GM12878 (cell line): ENCODE measurements at regions of chr2 and their contacts with region 1.

Region 1: DNA sequence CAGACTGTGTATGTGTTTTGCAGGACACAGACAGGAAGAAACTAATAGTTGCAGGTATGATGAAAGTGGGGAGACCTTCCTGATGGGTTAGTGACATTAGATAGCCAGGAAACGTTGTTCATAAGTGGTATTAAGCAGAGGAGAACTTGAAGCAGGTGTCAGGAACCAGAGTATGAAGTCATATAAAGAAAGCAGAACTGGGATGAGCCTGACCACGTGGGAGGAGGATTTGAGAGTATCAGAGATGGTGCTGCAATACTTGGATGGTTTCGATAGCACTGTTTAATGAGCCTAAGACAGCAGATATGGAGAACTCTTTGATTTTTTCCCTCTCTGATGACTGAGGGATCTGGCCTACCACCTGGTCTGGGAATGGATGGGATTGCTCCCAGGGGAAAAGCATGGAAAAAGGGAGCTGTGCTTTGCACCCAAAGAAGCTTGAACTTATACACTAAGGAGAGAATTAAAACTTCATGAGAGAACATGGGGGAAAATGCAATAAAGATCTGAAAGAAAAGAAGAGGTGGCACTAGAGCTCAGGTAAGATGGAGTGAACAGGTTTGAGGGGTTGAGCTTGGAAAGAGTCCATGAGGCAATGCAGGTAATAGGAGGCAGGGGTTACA is 226.0 kb upstream of the LRRTM1 start:
- DNase-seq: peak; percentile 82
- ATAC-seq: peak; percentile 76
- H3K4me3 ChIP-seq: no peak overlapping the region
- H3K27ac ChIP-seq: peak overlapping the region; percentile 92
- H3K4me1 ChIP-seq: peaks cover 40% of the 10 kb centered on the region
- H3K27me3 ChIP-seq: no peaks in the 10 kb centered on the region
- CTCF ChIP-seq: no peak
- EP300 ChIP-seq: peak; percentile 86 to 96
- POLR2A ChIP-seq: no peak
- RAD21 ChIP-seq: no peak

Region 2: GRCh38 chr2:79355569-79355968 is 1175.0 kb before region 1 on chr2:
- CTCF ChIA-PET with region 1: no interaction called
- POLR2A ChIA-PET with region 1: no interaction called
- RAD21 ChIA-PET with region 1: no interaction called
- SMC1A ChIA-PET with region 1: no interaction called
- in situ Hi-C with region 1: no loop called
- intact Hi-C with region 1: no loop called
- DNase-seq: no peak
- ATAC-seq: no peak
- H3K4me3 ChIP-seq: no peak overlapping the region
- H3K27ac ChIP-seq: no peak overlapping the region
- H3K4me1 ChIP-seq: no peaks in the 10 kb centered on the region
- H3K27me3 ChIP-seq: no peaks in the 10 kb centered on the region
- CTCF ChIP-seq: no peak
- EP300 ChIP-seq: no peak
- POLR2A ChIP-seq: no peak
- RAD21 ChIP-seq: no peak

Region 3: DNA sequence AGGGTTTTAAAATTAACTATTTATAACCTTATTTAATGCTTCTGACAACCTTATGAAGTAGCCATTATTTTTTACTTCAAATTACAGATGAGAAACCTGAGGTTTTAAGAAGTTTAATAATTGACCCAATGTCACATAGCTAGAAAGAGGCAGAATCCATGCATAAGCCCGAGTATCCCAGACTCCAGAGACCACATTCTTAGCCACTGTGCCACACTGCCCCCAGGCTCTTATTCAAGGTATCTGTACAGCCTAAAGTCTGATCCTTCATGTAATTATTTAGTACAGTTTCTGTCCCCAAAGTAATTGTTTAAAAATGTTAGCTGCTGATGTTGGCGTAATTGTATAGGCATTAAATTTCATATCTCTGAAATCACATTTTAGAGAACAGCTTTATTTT is 101.3 kb before region 1 on chr2:
- CTCF ChIA-PET with region 1: no interaction called
- POLR2A ChIA-PET with region 1: no interaction called
- RAD21 ChIA-PET with region 1: no interaction called
- SMC1A ChIA-PET with region 1: no interaction called
- in situ Hi-C with region 1: no loop called
- intact Hi-C with region 1: no loop called
- DNase-seq: no peak
- ATAC-seq: no peak
- H3K4me3 ChIP-seq: no peak overlapping the region
- H3K27ac ChIP-seq: no peak overlapping the region
- H3K4me1 ChIP-seq: no peaks in the 10 kb centered on the region
- H3K27me3 ChIP-seq: no peaks in the 10 kb centered on the region
- CTCF ChIP-seq: no peak
- EP300 ChIP-seq: no peak
- POLR2A ChIP-seq: no peak
- RAD21 ChIP-seq: no peak

Region 4: GRCh38 chr2:80461505-80462197 is 68.9 kb before region 1 on chr2:
- CTCF ChIA-PET with region 1: interaction called, 7 read pairs
- POLR2A ChIA-PET with region 1: interaction called, 56 read pairs
- RAD21 ChIA-PET with region 1: interaction called, 48 read pairs
- SMC1A ChIA-PET with region 1: interaction called, 38 read pairs
- in situ Hi-C with region 1: no loop called
- intact Hi-C with region 1: loop called (anchors 2 kb)
- DNase-seq: no peak
- ATAC-seq: peak; percentile 61
- H3K4me3 ChIP-seq: no peak overlapping the region; the same call in 1 of the 2 replicates
- H3K27ac ChIP-seq: 0 out of 2 replicates have a peak overlapping the region, but pooled peaks have one; percentile 4
- H3K4me1 ChIP-seq: peaks cover 3% of the 10 kb centered on the region; the same call in 1 of the 2 replicates
- H3K27me3 ChIP-seq: no peaks in the 10 kb centered on the region; a peak in 1 of 4 replicates
- CTCF ChIP-seq: no peak
- EP300 ChIP-seq: no peak
- POLR2A ChIP-seq: no peak
- RAD21 ChIP-seq: no peak

Region 5: GRCh38 chr2:80473796-80474195 is 56.8 kb before region 1 on chr2:
- CTCF ChIA-PET with region 1: interaction called, 4 read pairs
- POLR2A ChIA-PET with region 1: interaction called, 7 read pairs
- RAD21 ChIA-PET with region 1: interaction called, 18 read pairs
- SMC1A ChIA-PET with region 1: interaction called, 20 read pairs
- in situ Hi-C with region 1: no loop called
- intact Hi-C with region 1: no loop called
- DNase-seq: no peak
- ATAC-seq: 0 out of 3 replicates have a peak, but pooled peaks have one; percentile 11
- H3K4me3 ChIP-seq: no peak overlapping the region
- H3K27ac ChIP-seq: no peak overlapping the region; the same call in 1 of the 2 replicates
- H3K4me1 ChIP-seq: peaks cover 8% of the 10 kb centered on the region
- H3K27me3 ChIP-seq: no peaks in the 10 kb centered on the region
- CTCF ChIP-seq: no peak
- EP300 ChIP-seq: no peak
- POLR2A ChIP-seq: no peak
- RAD21 ChIP-seq: no peak

Region 6: DNA sequence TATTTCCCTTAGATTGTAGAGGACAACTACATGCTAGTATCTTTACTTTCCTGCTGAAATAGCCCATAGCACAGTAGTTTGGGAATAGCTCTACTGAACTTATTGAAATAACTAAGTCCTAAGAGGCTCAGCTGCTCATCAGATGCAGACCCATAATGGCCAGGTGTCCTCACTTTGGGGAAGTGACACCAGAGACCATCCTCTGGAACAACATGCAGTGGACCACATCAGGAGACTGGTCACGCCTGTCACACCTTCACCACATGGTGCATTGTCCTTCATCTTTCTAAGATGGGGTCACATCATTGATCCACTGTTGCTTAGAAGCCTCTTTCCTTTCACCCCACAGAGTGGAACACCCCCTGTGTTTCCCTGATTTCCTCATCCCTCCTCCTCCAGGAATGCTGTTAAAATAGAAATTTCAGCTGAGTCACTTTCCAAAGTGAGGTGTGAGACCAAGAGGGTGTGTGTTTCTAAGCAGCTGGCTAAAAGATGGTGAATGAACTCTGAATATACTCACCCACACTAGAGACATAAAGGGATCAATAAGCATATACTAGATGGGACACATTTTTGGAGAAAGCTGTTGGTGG is 10.8 kb before region 1 on chr2:
- CTCF ChIA-PET with region 1: interaction called, 7 read pairs
- POLR2A ChIA-PET with region 1: interaction called, 4 read pairs
- RAD21 ChIA-PET with region 1: interaction called, 7 read pairs
- SMC1A ChIA-PET with region 1: interaction called, 26 read pairs
- in situ Hi-C with region 1: no loop called
- intact Hi-C with region 1: no loop called
- DNase-seq: no peak
- ATAC-seq: peak; percentile 68
- H3K4me3 ChIP-seq: no peak overlapping the region
- H3K27ac ChIP-seq: no peak overlapping the region
- H3K4me1 ChIP-seq: peaks cover 17% of the 10 kb centered on the region
- H3K27me3 ChIP-seq: no peaks in the 10 kb centered on the region
- CTCF ChIP-seq: no peak
- EP300 ChIP-seq: 0 out of 4 replicates have a peak, but pooled peaks of 1 of the 2 experiments have one; percentile 10
- POLR2A ChIP-seq: no peak
- RAD21 ChIP-seq: no peak

Region 7: DNA sequence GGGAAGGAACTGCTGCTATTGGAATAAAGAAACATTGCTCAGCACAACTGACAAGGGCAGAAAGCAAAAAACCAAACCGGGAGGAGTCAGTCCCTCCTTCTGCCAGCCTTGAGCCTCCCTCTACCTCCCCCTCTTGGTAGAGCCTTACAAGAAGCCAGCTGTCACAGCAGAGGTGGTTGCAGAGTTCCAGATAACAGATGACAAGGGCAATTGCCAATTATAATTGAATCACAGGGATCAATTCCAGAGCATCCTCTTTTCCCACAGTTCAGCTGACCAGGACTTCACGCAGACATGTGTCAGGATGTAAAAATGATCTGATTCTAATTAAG is 322.2 kb after region 1 on chr2:
- CTCF ChIA-PET with region 1: interaction called, 5 read pairs
- POLR2A ChIA-PET with region 1: no interaction called
- RAD21 ChIA-PET with region 1: no interaction called
- SMC1A ChIA-PET with region 1: interaction called, 3 read pairs
- in situ Hi-C with region 1: no loop called
- intact Hi-C with region 1: loop called (anchors 5 kb)
- DNase-seq: no peak
- ATAC-seq: peak; percentile 73
- H3K4me3 ChIP-seq: no peak overlapping the region
- H3K27ac ChIP-seq: no peak overlapping the region
- H3K4me1 ChIP-seq: no peaks in the 10 kb centered on the region
- H3K27me3 ChIP-seq: no peaks in the 10 kb centered on the region
- CTCF ChIP-seq: peak; percentile 12 to 31 (median 25); a peak in 3 of 6 replicates
- EP300 ChIP-seq: no peak
- POLR2A ChIP-seq: no peak
- RAD21 ChIP-seq: peak; percentile 34